K562 (cell line): ENCODE measurements at regions of chr11 and their contacts with region 1.

Region 1: GRCh38 chr11:4178813-4179662 is 84.4 kb downstream of the RRM1 start:
- DNase-seq: no peak
- ATAC-seq: no peak
- H3K4me3 ChIP-seq: no peak overlapping the region
- H3K27ac ChIP-seq: no peak overlapping the region
- H3K4me1 ChIP-seq: peaks cover 5 to 9% of the 10 kb centered on the region in 2 experiments; a peak in 3 of 5 replicates
- H3K27me3 ChIP-seq: no peaks in the 10 kb centered on the region
- CTCF ChIP-seq: no peak
- EP300 ChIP-seq: no peak
- POLR2A ChIP-seq: no peak
- RAD21 ChIP-seq: no peak

Region 2: GRCh38 chr11:3747684-3748083 is 431.4 kb before region 1 on chr11:
- CTCF ChIA-PET with region 1: no interaction called
- POLR2A ChIA-PET with region 1: no interaction called
- in situ Hi-C with region 1: no loop called
- intact Hi-C with region 1: no loop called
- DNase-seq: no peak
- ATAC-seq: no peak
- H3K4me3 ChIP-seq: no peak overlapping the region
- H3K27ac ChIP-seq: no peak overlapping the region
- H3K4me1 ChIP-seq: no peaks in the 10 kb centered on the region
- H3K27me3 ChIP-seq: no peaks in the 10 kb centered on the region
- CTCF ChIP-seq: no peak
- EP300 ChIP-seq: no peak
- POLR2A ChIP-seq: no peak
- RAD21 ChIP-seq: no peak

Region 3: GRCh38 chr11:4118107-4118506 is 60.9 kb before region 1 on chr11:
- CTCF ChIA-PET with region 1: no interaction called
- POLR2A ChIA-PET with region 1: no interaction called
- in situ Hi-C with region 1: no loop called
- intact Hi-C with region 1: no loop called
- DNase-seq: no peak
- ATAC-seq: no peak
- H3K4me3 ChIP-seq: no peak overlapping the region
- H3K27ac ChIP-seq: no peak overlapping the region
- H3K4me1 ChIP-seq: no peaks in the 10 kb centered on the region
- H3K27me3 ChIP-seq: no peaks in the 10 kb centered on the region
- CTCF ChIP-seq: no peak
- EP300 ChIP-seq: no peak
- POLR2A ChIP-seq: no peak
- RAD21 ChIP-seq: no peak

Region 4: GRCh38 chr11:4146070-4146771 is 32.8 kb before region 1 on chr11:
- CTCF ChIA-PET with region 1: no interaction called
- POLR2A ChIA-PET with region 1: no interaction called
- in situ Hi-C with region 1: no loop called
- intact Hi-C with region 1: no loop called
- DNase-seq: peak; percentile 27 to 75 (median 52)
- ATAC-seq: peak; percentile 89
- H3K4me3 ChIP-seq: no peak overlapping the region
- H3K27ac ChIP-seq: peak overlapping the region; percentile 63
- H3K4me1 ChIP-seq: peaks cover 27 to 32% of the 10 kb centered on the region in 2 experiments
- H3K27me3 ChIP-seq: no peaks in the 10 kb centered on the region
- CTCF ChIP-seq: 0 out of 6 replicates have a peak, but pooled peaks of 1 of the 3 experiments have one; percentile 2
- EP300 ChIP-seq: no peak; the same call in 1 of the 2 replicates
- POLR2A ChIP-seq: no peak
- RAD21 ChIP-seq: no peak

Region 5: GRCh38 chr11:4593739-4594138 is 414.7 kb after region 1 on chr11 and contains the start of gene OR52I1:
- CTCF ChIA-PET with region 1: no interaction called
- POLR2A ChIA-PET with region 1: no interaction called
- in situ Hi-C with region 1: no loop called
- intact Hi-C with region 1: no loop called
- DNase-seq: no peak
- ATAC-seq: no peak
- H3K4me3 ChIP-seq: no peak within 1 kb of the TSS
- H3K27ac ChIP-seq: no peak within 1 kb of the TSS
- H3K4me1 ChIP-seq: no peaks in the 10 kb centered on the region
- H3K27me3 ChIP-seq: peaks cover 8 to 9% of the 10 kb centered on the region in 2 experiments; a peak in 3 of 5 replicates
- CTCF ChIP-seq: no peak
- EP300 ChIP-seq: no peak
- POLR2A ChIP-seq: no peak
- RAD21 ChIP-seq: no peak
- polyA plus RNA-seq, gene OR52I1: not detected

Region 6: DNA sequence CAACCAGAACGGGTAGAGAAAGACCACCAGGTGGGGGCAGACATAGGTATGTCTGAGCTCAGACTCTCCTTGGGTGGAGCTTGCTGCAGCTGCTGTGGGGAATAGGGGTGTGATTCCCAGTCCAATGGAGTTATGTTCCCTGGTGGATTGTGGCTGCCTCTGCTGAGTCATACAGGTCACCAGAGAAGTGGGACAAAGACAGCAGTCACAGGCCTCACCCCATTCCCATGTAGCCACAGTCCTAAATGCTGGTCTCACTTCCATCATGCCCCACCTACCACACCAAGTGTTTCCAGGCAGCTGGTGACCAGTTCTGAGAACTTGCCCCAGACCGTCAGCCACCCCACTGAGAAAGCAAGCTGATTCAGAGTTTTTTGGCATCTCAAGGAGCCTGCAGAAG is 1731.5 kb after region 1 on chr11:
- CTCF ChIA-PET with region 1: no interaction called
- POLR2A ChIA-PET with region 1: no interaction called
- in situ Hi-C with region 1: no loop called
- intact Hi-C with region 1: loop called (anchors 10 kb)
- DNase-seq: no peak
- ATAC-seq: no peak
- H3K4me3 ChIP-seq: no peak overlapping the region
- H3K27ac ChIP-seq: no peak overlapping the region
- H3K4me1 ChIP-seq: no peaks in the 10 kb centered on the region
- H3K27me3 ChIP-seq: no peaks in the 10 kb centered on the region
- CTCF ChIP-seq: no peak
- EP300 ChIP-seq: no peak
- POLR2A ChIP-seq: no peak
- RAD21 ChIP-seq: no peak